ENCODE measurements at regions of chr10 and their contacts with region 1.

Region 1: DNA sequence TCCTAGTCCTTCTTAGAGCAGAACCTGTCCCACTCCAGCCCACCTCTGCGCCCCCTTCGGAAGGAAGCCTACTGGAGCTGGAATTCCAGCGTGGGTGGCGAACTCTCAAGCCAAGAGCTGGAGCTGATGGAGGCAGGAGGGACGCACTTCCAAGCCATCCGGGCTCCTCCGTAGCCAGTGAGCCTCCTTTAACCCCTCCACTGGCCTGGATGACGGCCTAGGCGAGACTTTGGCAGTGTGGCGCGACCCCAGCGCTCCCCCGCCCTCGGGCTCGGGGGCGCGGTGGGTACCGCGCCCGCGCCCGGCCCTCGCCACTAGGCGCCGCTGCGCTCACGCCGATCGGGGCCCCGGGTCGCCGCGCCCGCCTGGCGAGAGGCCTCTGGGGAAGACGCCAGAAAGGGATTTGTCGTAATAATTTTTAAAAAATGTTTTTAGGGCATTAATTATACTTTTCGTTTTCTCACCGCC is 5.1 kb upstream of the EMX2 start:
- DNase-seq: no peak
- ATAC-seq: peak in 3 of 4 donors; percentile 56 to 82 (median 61)
- H3K4me3 ChIP-seq: peak overlapping the region in 5 of 12 donors; percentile 16 to 43 (median 33)
- H3K27ac ChIP-seq: no peak overlapping the region
- H3K4me1 ChIP-seq: peaks cover 0 to 46% (median 22%) of the 10 kb centered on the region in 12 donors
- H3K27me3 ChIP-seq: peaks cover 64 to 100% (median 98%) of the 10 kb centered on the region in 9 donors
- CTCF ChIP-seq: peak in 11 of 12 donors; percentile 38 to 79 (median 70)
- POLR2A ChIP-seq: no peak

Region 2: GRCh38 chr10:117946525-117947070 is 409.1 kb after region 1 on chr10:
- intact Hi-C with region 1: no loop called
- DNase-seq: no peak
- ATAC-seq: no peak
- H3K4me3 ChIP-seq: no peak overlapping the region
- H3K27ac ChIP-seq: no peak overlapping the region
- H3K4me1 ChIP-seq: no peaks in the 10 kb centered on the region
- H3K27me3 ChIP-seq: no peaks in the 10 kb centered on the region
- CTCF ChIP-seq: no peak
- POLR2A ChIP-seq: no peak

Region 3: GRCh38 chr10:118106426-118106825 is 569.0 kb after region 1 on chr10:
- intact Hi-C with region 1: loop called in 4 of 10 experiments (anchors 5 to 10 kb)
- DNase-seq: peak in 1 of 5 donors; percentile 8
- ATAC-seq: no peak
- H3K4me3 ChIP-seq: no peak overlapping the region
- H3K27ac ChIP-seq: no peak overlapping the region
- H3K4me1 ChIP-seq: no peaks in the 10 kb centered on the region
- H3K27me3 ChIP-seq: peaks cover 0 to 5% (median 0%) of the 10 kb centered on the region in 9 donors
- CTCF ChIP-seq: peak in 10 of 12 donors; percentile 16 to 52 (median 35)
- POLR2A ChIP-seq: no peak

Measured in heart left ventricle (tissue), 16 donors.